ENCODE measurements at regions of chr22 and their contacts with region 1.

Region 1: DNA sequence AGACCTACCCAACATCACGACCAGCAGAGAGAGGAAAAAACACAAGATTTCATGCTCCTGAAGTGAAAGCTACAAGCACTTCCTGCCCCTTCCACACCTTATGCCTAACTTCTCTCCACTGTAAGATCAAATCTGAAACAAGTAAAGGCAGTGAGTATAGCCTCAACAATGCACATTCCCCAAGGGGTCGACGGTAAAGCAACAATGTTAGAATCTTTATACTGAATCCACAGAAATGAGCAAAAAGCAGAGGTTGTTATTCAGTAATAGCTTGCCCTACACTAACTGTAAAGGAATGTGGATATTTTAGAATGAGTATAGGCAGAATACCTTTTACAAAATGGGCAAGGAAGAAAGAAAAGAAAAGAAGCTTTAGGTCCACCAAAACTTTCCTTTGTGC is 15.6 kb downstream of the ARFGAP3 start:
- DNase-seq: no peak
- ATAC-seq: no peak
- H3K4me3 ChIP-seq: no peak overlapping the region
- H3K27ac ChIP-seq: no peak overlapping the region
- H3K4me1 ChIP-seq: no peaks in the 10 kb centered on the region
- H3K27me3 ChIP-seq: no peaks in the 10 kb centered on the region
- CTCF ChIP-seq: no peak

Region 2: DNA sequence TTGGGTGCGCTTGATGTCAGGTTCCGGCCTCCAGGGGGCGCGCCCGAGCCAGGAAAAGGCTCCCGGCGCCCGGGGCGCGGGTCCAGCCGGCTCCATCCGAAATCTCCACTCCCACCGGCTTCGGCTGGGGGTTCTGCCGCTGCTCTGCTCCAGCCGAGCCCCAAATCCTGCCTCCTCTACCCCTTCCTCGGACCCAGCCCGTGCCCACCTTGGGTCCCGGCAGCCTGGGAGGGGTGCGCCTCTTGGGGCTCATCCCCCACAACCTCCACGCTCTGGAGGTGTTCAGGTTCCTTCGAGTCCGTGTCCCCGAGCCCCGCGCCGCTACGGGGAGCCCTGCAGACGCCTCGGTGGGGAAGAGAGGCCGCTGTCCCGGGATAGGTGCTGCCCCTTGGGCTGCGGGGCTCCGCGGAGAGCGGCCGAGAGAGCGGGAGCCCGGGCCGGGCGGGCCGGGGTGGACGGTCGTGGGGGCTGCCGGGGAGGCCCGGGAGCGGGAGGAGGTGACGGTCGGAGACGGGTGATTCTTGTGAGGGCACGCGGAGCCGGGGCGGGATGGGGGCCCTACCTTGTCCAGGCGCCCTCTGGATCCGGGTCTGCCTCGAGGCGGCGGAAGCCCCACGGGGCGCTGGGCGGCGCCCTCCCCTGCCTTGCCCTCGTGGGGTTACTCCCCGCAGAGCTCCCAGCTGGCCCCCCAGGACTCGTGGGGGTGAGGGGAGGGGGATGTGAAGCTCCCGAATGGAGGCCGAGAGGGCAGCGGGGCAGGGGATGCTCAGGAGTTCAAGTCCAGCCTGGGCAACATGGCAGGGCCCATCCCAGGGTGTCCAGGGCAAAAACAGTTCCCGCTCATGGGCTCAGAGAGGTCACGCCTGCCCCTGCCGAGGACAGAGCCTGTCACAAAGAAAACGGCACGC is 179.1 kb before region 1 on chr22:
- CTCF ChIA-PET with region 1: no interaction called
- POLR2A ChIA-PET with region 1: interaction called, 12 read pairs
- in situ Hi-C with region 1: no loop called
- intact Hi-C with region 1: no loop called
- DNase-seq: no peak
- ATAC-seq: peak; percentile 92
- H3K4me3 ChIP-seq: peak overlapping the region; percentile 43 to 61
- H3K27ac ChIP-seq: no peak overlapping the region
- H3K4me1 ChIP-seq: no peaks in the 10 kb centered on the region
- H3K27me3 ChIP-seq: no peaks in the 10 kb centered on the region
- CTCF ChIP-seq: peak; percentile 88

Region 3: DNA sequence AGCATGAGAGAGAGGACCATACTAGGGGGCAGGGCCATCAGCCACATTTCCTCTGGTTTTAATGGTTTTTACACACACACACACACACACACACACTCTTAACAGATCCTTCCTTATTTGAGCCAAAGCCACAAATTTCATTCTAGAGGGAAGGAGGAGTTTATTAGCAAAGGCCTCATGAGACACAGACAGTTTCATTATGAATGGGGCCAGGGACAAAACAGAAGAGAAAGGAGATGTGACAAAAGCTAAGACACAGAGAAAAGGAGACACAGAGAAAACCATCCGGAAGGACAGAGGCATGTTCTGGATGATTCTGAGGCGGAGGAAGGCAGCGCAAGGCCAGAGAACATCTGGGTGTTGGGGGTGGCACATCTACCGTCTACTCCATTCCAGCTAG is 47.9 kb after region 1 on chr22:
- CTCF ChIA-PET with region 1: no interaction called
- POLR2A ChIA-PET with region 1: no interaction called
- in situ Hi-C with region 1: no loop called
- intact Hi-C with region 1: no loop called
- DNase-seq: no peak
- ATAC-seq: no peak
- H3K4me3 ChIP-seq: no peak overlapping the region
- H3K27ac ChIP-seq: no peak overlapping the region
- H3K4me1 ChIP-seq: no peaks in the 10 kb centered on the region
- H3K27me3 ChIP-seq: no peaks in the 10 kb centered on the region
- CTCF ChIP-seq: no peak

Region 4: GRCh38 chr22:42901790-42902508 is 60.5 kb after region 1 on chr22:
- CTCF ChIA-PET with region 1: no interaction called
- POLR2A ChIA-PET with region 1: no interaction called
- in situ Hi-C with region 1: no loop called
- intact Hi-C with region 1: no loop called
- DNase-seq: no peak
- ATAC-seq: no peak
- H3K4me3 ChIP-seq: no peak overlapping the region
- H3K27ac ChIP-seq: no peak overlapping the region
- H3K4me1 ChIP-seq: no peaks in the 10 kb centered on the region
- H3K27me3 ChIP-seq: no peaks in the 10 kb centered on the region
- CTCF ChIP-seq: no peak

Region 5: GRCh38 chr22:43001271-43002201 is 160.1 kb after region 1 on chr22:
- CTCF ChIA-PET with region 1: no interaction called
- POLR2A ChIA-PET with region 1: interaction called, 12 read pairs
- in situ Hi-C with region 1: no loop called
- intact Hi-C with region 1: no loop called
- DNase-seq: no peak
- ATAC-seq: 0 out of 2 replicates have a peak, but pooled peaks have one; percentile 38
- H3K4me3 ChIP-seq: no peak overlapping the region
- H3K27ac ChIP-seq: no peak overlapping the region
- H3K4me1 ChIP-seq: peaks cover 33% of the 10 kb centered on the region
- H3K27me3 ChIP-seq: no peaks in the 10 kb centered on the region
- CTCF ChIP-seq: no peak

Measured in Panc1 (cell line).